ENCODE measurements at regions of chr4 and their contacts with region 1.

Region 1: GRCh38 chr4:76511947-76512346 is 76.9 kb downstream of the SHROOM3 start:
- DNase-seq: no peak
- ATAC-seq: no peak
- H3K4me3 ChIP-seq: no peak overlapping the region
- H3K27ac ChIP-seq: peak overlapping the region; percentile 54; the same call in 1 of the 2 replicates
- H3K4me1 ChIP-seq: no peaks in the 10 kb centered on the region
- H3K27me3 ChIP-seq: no peaks in the 10 kb centered on the region
- CTCF ChIP-seq: no peak

Region 2: GRCh38 chr4:76430519-76431388 is 81.2 kb before region 1 on chr4:
- CTCF ChIA-PET with region 1: no interaction called
- POLR2A ChIA-PET with region 1: no interaction called
- in situ Hi-C with region 1: no loop called
- intact Hi-C with region 1: no loop called
- DNase-seq: peak; percentile 10
- ATAC-seq: no peak
- H3K4me3 ChIP-seq: no peak overlapping the region
- H3K27ac ChIP-seq: no peak overlapping the region
- H3K4me1 ChIP-seq: no peaks in the 10 kb centered on the region
- H3K27me3 ChIP-seq: no peaks in the 10 kb centered on the region
- CTCF ChIP-seq: peak; percentile 76

Region 3: GRCh38 chr4:76634239-76634638 is 122.3 kb after region 1 on chr4:
- CTCF ChIA-PET with region 1: no interaction called
- POLR2A ChIA-PET with region 1: no interaction called
- in situ Hi-C with region 1: no loop called
- intact Hi-C with region 1: no loop called
- DNase-seq: no peak
- ATAC-seq: peak; percentile 60; the same call in 1 of the 2 replicates
- H3K4me3 ChIP-seq: no peak overlapping the region
- H3K27ac ChIP-seq: peak overlapping the region; percentile 54; the same call in 1 of the 2 replicates
- H3K4me1 ChIP-seq: no peaks in the 10 kb centered on the region; the same call in 1 of the 2 replicates
- H3K27me3 ChIP-seq: no peaks in the 10 kb centered on the region
- CTCF ChIP-seq: no peak

Region 4: GRCh38 chr4:76748649-76749048 is 236.7 kb after region 1 on chr4:
- CTCF ChIA-PET with region 1: no interaction called
- POLR2A ChIA-PET with region 1: no interaction called
- in situ Hi-C with region 1: no loop called
- intact Hi-C with region 1: loop called (anchors 1 kb)
- DNase-seq: no peak
- ATAC-seq: no peak
- H3K4me3 ChIP-seq: no peak overlapping the region
- H3K27ac ChIP-seq: no peak overlapping the region
- H3K4me1 ChIP-seq: no peaks in the 10 kb centered on the region; the same call in 1 of the 2 replicates
- H3K27me3 ChIP-seq: no peaks in the 10 kb centered on the region
- CTCF ChIP-seq: peak; percentile 66

Region 5: GRCh38 chr4:77044461-77045150 is 532.7 kb after region 1 on chr4:
- CTCF ChIA-PET with region 1: no interaction called
- POLR2A ChIA-PET with region 1: no interaction called
- in situ Hi-C with region 1: no loop called
- intact Hi-C with region 1: loop called (anchors 5 kb)
- DNase-seq: no peak
- ATAC-seq: peak; percentile 61; the same call in 1 of the 2 replicates
- H3K4me3 ChIP-seq: no peak overlapping the region
- H3K27ac ChIP-seq: no peak overlapping the region
- H3K4me1 ChIP-seq: no peaks in the 10 kb centered on the region
- H3K27me3 ChIP-seq: no peaks in the 10 kb centered on the region
- CTCF ChIP-seq: peak; percentile 68